H1 (cell line): ENCODE measurements at regions of chr2 and their contacts with region 1.

Region 1: GRCh38 chr2:85813982-85814801 is 60.4 kb downstream of the ATOH8 start:
- DNase-seq: peak; percentile 81 to 97
- H3K4me3 ChIP-seq: no peak overlapping the region
- H3K27ac ChIP-seq: no peak overlapping the region
- H3K4me1 ChIP-seq: no peaks in the 10 kb centered on the region; a peak in 4 of 7 replicates
- H3K27me3 ChIP-seq: no peaks in the 10 kb centered on the region; a peak in 1 of 7 replicates
- CTCF ChIP-seq: peak; percentile 95 to 99 (median 99)
- EP300 ChIP-seq: no peak
- POLR2A ChIP-seq: no peak
- RAD21 ChIP-seq: peak; percentile 97 to 98

Region 2: DNA sequence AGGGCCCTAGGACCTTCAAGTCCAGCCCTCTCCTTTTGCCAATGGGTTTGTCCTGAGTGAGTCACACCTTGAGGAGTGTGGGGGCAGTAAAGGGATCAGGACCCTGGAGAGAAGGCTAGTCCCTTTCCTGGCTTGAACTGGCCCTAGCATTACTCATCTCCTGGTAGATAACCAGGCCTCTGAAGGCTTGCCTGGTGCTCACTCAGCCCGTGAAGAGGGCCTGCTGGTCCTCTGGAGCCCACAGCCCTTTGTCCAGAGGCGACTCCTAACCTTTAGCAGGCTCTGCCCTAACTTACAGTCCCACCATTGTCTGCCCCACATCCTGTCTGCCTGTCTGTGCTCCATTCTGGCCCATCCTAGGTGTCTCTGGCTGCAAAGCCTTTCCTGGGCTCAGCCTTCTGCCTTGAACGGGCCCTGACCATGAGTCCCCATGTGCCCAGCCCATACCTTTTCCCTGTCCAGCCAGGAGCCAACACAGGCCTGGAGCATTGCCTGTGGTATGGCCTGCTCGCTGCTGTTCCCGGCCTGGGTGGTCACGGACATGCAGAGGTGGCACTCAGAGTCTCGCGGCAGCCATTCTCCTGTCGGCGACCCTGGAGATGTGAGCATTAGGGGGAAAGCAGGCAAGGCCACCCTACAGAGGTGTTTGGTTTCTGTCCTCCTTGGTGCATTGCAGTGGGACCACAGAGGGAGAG is 151.1 kb before region 1 on chr2:
- CTCF ChIA-PET with region 1: interaction called, 10 read pairs
- POLR2A ChIA-PET with region 1: interaction called, 3 read pairs
- DNase-seq: peak in 1 of 2 experiments; percentile 25
- H3K4me3 ChIP-seq: no peak overlapping the region
- H3K27ac ChIP-seq: no peak overlapping the region
- H3K4me1 ChIP-seq: peaks cover 0 to 3% (median under 1%) of the 10 kb centered on the region in 4 experiments; a peak in 2 of 7 replicates
- H3K27me3 ChIP-seq: no peaks in the 10 kb centered on the region
- CTCF ChIP-seq: no peak
- EP300 ChIP-seq: no peak
- POLR2A ChIP-seq: no peak
- RAD21 ChIP-seq: no peak

Region 3: DNA sequence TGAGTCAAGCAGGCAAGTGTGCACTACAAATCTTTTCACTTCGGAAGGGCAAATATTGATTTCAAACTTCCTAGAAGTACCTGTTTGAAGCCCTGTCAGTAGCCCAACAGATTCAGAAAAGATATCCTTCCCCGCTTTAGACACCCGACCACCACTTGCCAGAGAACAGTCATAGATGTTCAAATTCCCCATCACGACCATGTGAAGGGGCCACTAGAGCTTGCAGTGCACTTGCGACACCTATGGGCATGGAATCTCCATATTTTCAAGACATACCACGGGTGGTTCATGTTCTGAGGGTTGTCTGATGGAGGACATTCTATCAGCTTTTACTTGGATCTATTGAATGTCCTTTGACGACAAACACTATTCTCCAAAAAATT is 96.2 kb before region 1 on chr2:
- CTCF ChIA-PET with region 1: interaction called, 55 read pairs
- POLR2A ChIA-PET with region 1: no interaction called
- DNase-seq: no peak
- H3K4me3 ChIP-seq: no peak overlapping the region
- H3K27ac ChIP-seq: no peak overlapping the region
- H3K4me1 ChIP-seq: no peaks in the 10 kb centered on the region
- H3K27me3 ChIP-seq: no peaks in the 10 kb centered on the region; a peak in 1 of 7 replicates
- CTCF ChIP-seq: no peak
- EP300 ChIP-seq: no peak
- POLR2A ChIP-seq: no peak
- RAD21 ChIP-seq: peak in 1 of 2 experiments; percentile 23; a peak in 2 of 4 replicates

Region 4: DNA sequence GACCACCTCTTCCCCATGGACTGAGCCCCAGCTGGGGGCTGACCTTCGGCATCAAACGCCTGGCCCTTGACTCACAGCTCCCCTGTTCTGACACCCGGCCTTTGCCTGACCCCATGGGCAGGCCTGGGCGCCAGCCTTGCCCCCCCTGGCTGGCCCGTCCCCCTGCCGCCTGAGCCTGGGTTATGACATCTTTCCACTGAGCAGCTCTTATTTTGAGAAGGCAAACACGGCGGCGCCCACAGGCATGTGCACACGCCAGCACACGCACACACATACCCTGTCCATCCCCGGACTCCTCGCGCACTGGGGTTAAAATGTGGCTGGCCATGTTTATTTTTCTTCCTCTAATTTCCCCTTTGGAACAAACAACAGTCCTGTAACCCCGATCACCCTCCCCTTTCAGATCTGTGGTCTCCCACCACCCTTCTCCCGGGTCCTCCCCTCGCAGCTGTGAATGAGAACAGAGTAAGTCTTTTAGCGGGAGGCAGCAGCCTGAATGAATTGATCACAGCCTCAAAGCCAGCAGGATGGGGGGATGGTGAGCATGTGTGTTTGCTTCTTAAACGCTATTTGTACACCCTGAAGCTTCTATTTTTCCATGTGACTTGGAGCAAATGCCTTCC is 72.2 kb before region 1 on chr2:
- CTCF ChIA-PET with region 1: interaction called, 102 read pairs
- POLR2A ChIA-PET with region 1: no interaction called
- DNase-seq: no peak
- H3K4me3 ChIP-seq: no peak overlapping the region
- H3K27ac ChIP-seq: no peak overlapping the region
- H3K4me1 ChIP-seq: peaks cover 0 to 7% (median 4%) of the 10 kb centered on the region in 4 experiments; a peak in 2 of 7 replicates
- H3K27me3 ChIP-seq: peaks cover 0 to 3% (median 2%) of the 10 kb centered on the region in 4 experiments; a peak in 3 of 7 replicates
- CTCF ChIP-seq: no peak
- EP300 ChIP-seq: no peak
- POLR2A ChIP-seq: no peak
- RAD21 ChIP-seq: no peak

Region 5: GRCh38 chr2:85765081-85765731 is 49.0 kb before region 1 on chr2:
- CTCF ChIA-PET with region 1: interaction called, 40 read pairs
- POLR2A ChIA-PET with region 1: interaction called, 3 read pairs
- DNase-seq: peak in 1 of 2 experiments; percentile 69
- H3K4me3 ChIP-seq: peak overlapping the region; percentile 16 to 55 (median 38); a peak in 6 of 8 replicates
- H3K27ac ChIP-seq: no peak overlapping the region
- H3K4me1 ChIP-seq: peaks cover 5 to 41% (median 30%) of the 10 kb centered on the region in 4 experiments
- H3K27me3 ChIP-seq: peaks cover 0 to 29% (median 22%) of the 10 kb centered on the region in 4 experiments; a peak in 6 of 7 replicates
- CTCF ChIP-seq: no peak
- EP300 ChIP-seq: no peak
- POLR2A ChIP-seq: no peak
- RAD21 ChIP-seq: no peak

Region 6: DNA sequence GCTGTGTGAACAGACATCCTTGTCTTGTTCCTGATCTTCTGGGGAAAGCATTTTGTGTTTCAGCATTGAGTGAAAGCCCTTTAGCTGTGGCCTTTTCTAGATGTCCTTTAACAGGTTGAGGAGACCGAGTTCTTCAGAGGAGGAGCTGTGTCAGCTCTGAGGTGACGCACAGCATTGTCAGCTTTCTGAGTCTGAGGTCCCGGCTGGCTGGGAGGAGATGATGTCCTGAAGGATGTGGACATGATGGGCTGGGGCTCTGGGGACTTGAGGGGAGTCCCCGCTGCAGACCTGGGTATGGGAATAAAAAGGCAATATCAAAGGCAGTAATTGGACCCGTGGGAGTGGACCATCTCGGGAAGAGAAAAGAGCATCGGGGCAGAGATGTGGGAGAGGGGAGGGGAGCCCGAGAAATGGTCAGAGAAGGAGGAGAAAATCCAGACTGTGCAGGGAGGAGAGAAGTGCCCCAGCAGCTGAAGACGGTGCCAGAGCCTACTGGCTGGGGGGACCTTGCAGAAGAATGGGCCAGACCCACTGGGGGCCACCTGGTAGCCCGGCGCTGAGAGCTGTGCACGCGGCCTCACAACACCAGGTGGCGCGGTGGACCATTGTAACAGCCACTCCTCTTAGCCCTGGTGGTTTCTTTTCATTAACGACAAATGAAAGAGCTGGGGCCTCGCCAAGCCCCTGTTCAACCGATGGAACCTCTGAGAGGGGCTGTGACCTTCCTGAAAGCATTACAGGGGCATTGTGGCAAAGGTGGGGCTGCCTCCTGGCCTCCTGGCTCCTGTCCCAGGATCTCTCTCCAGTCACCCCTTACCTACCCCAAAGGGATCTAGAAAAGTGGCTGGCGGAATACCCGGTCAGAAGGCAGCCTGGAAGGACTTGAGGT is 13.0 kb after region 1 on chr2:
- CTCF ChIA-PET with region 1: interaction called, 26 read pairs
- POLR2A ChIA-PET with region 1: no interaction called
- DNase-seq: peak in 1 of 2 experiments; percentile 92
- H3K4me3 ChIP-seq: 0 out of 8 replicates have a peak overlapping the region, but pooled peaks of 1 of the 4 experiments have one; percentile 0
- H3K27ac ChIP-seq: no peak overlapping the region
- H3K4me1 ChIP-seq: peaks cover 0 to 3% (median 0%) of the 10 kb centered on the region in 4 experiments; a peak in 3 of 7 replicates
- H3K27me3 ChIP-seq: no peaks in the 10 kb centered on the region
- CTCF ChIP-seq: peak; percentile 84 to 89 (median 87)
- EP300 ChIP-seq: no peak
- POLR2A ChIP-seq: no peak
- RAD21 ChIP-seq: peak; percentile 88 to 91

Region 7: DNA sequence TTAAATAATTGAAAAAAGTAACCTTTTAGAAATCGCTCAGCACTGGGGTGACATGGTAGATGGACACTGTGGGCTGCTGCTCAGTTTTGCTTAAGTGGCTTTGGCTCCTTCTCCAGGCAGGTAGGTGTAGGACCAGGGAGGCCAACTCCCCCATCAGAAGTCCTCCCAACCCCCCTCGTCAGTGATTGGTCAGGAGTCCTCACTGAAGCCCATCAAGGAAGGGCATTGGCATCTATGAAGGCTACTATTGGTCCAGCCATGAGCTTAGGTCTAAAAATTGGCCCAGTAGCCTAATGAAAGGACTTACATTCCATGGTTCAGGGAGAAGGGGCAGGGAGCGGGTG is 39.9 kb after region 1 on chr2:
- CTCF ChIA-PET with region 1: no interaction called
- POLR2A ChIA-PET with region 1: no interaction called
- DNase-seq: no peak
- H3K4me3 ChIP-seq: no peak overlapping the region
- H3K27ac ChIP-seq: no peak overlapping the region
- H3K4me1 ChIP-seq: peaks cover 0 to 3% (median 0%) of the 10 kb centered on the region in 4 experiments; a peak in 4 of 7 replicates
- H3K27me3 ChIP-seq: no peaks in the 10 kb centered on the region
- CTCF ChIP-seq: no peak
- EP300 ChIP-seq: no peak
- POLR2A ChIP-seq: no peak
- RAD21 ChIP-seq: no peak

Region 8: GRCh38 chr2:85930129-85931124 is 116.2 kb after region 1 on chr2:
- CTCF ChIA-PET with region 1: no interaction called
- POLR2A ChIA-PET with region 1: no interaction called
- DNase-seq: no peak
- H3K4me3 ChIP-seq: no peak overlapping the region
- H3K27ac ChIP-seq: no peak overlapping the region
- H3K4me1 ChIP-seq: no peaks in the 10 kb centered on the region
- H3K27me3 ChIP-seq: no peaks in the 10 kb centered on the region
- CTCF ChIP-seq: no peak
- EP300 ChIP-seq: no peak
- POLR2A ChIP-seq: no peak
- RAD21 ChIP-seq: no peak